ENCODE measurements at regions of chr15 and their contacts with region 1.

Region 1: DNA sequence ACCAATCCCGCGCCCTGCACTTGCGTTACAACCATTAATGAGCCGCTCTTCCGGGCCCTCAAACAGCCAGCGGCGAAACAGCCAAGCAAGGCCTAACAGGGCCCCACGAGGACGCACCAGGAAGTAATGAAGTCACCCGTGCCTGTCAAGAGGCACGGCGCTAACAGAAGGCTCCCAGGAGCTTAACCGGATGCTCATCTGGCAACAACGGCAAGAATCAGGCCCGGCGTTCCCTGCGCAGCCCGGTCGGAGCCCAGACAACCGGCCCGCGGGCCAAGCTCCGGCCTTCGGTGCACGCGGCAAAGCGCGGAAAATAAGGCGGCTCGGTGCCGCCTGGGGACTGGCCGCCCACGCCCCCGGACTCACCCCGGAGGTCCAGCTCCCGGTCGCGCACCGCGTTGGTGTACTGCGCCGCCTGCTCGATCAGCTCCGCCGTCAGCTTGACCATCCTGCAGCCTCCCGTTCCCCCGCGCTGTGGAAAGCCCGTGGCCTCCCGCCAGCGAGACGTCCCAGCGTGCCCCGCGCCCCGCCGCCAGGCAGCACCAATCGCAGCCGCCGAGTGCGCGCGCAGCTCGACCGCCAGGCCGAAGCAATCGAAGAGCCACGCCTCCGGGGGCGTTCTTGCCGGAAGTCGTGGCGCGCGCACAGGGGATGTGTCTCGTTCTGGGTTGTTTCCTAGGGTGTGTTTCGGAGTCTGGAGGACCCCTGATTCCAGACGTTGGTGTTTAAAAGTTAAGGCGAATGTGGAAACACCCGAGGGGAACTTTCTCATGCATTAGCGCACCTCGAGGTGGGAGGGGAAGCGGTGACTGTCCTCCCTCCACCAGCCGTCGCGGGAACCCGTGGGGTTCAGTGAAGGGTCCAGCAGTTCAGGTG is at the start of gene SNRPA1:
- ATAC-seq: peak; percentile 60 to 95 (median 92)
- H3K4me3 ChIP-seq: peak within 1 kb of the TSS; percentile 74 to 93 (median 79)
- H3K27ac ChIP-seq: peak within 1 kb of the TSS; percentile 87 to 92
- H3K4me1 ChIP-seq: peaks cover 10 to 19% of the 10 kb centered on the region in 2 donors
- total RNA-seq, gene SNRPA1: 30.9 to 101 (median 68.4) TPM

Region 2: DNA sequence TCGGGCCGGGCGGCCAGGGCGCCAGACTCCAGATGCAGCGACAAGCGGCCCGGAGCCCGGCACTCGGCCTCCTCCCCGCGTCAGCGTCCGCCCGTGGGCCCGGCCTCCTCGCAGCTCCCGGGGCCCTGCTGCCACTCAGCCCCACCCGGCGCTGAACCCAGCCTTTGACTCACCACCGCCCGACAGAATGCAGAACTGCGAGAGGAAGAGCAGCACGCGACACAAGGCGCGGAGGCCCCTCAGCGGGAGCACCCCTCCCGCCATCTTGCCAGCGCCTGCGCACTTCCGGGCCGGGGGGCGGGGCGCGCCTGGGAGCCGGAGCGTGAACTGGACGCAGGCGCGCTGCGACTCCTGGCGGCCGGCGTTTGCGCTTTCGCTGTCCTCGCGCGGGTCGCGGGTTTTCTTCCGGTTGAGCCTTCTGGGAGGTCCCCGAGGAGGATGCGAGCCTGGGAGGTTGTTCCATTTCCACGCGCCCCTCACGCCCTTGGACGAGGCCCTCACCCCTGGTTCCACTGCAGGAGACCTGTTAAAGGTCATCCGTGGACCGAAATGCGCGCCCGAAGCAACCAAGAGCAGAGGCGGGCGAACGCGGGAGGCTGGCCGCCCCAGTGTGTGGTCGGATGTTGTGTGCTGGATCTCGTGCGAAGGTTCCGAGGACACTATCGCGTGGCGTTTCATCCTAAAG is 357.3 kb after region 1 on chr15 and contains the start of gene TM2D3:
- in situ Hi-C with region 1: loop called in 7 of 9 experiments (anchors 10 kb)
- ATAC-seq: peak; percentile 83 to 94 (median 91)
- H3K4me3 ChIP-seq: peak within 1 kb of the TSS; percentile 69 to 97 (median 80)
- H3K27ac ChIP-seq: peak within 1 kb of the TSS; percentile 89 to 95
- H3K4me1 ChIP-seq: peaks cover 6 to 19% of the 10 kb centered on the region in 2 donors
- total RNA-seq, gene TM2D3: 38.4 to 96.6 (median 64.0) TPM

Measured in motor neuron (in vitro differentiated cells).